ENCODE measurements at regions of chr10 and their contacts with region 1.

Region 1: DNA sequence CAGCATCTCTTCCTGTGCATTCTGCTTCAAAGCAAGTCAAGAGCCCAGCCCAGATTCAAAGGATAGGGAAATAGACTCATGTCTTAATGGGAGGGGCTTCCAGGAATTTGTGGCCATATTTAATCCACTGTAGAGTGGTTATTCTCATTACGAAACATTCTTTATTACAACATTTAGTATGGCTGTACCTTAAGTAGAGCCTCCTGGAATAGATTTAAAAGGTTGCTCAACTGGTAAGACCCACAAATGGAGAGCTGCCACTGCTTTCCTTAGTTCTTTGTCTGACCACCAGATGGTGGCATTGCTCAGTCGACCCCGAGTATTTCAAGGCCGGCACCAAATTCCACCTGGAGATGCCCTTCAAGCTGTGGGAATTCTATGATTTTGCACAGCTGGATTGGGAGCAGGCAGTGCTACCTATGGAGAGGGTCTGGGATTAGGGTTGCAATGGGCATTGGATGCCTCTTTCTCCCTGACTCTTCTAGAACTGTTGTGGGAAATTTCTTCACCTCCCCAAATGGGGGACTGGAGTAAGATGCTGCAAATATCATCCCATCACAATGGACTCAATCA is 102.2 kb downstream of the RBM20 start:
- DNase-seq: peak in 9 of 10 donors; percentile 24 to 73 (median 61)
- H3K4me3 ChIP-seq: no peak overlapping the region
- H3K27ac ChIP-seq: peak overlapping the region in 1 of 59 donors; percentile 18
- H3K27me3 ChIP-seq: peaks cover 0 to 3% (median 0%) of the 10 kb centered on the region in 45 donors
- CTCF ChIP-seq: peak; percentile 63 to 96 (median 87)

Region 2: DNA sequence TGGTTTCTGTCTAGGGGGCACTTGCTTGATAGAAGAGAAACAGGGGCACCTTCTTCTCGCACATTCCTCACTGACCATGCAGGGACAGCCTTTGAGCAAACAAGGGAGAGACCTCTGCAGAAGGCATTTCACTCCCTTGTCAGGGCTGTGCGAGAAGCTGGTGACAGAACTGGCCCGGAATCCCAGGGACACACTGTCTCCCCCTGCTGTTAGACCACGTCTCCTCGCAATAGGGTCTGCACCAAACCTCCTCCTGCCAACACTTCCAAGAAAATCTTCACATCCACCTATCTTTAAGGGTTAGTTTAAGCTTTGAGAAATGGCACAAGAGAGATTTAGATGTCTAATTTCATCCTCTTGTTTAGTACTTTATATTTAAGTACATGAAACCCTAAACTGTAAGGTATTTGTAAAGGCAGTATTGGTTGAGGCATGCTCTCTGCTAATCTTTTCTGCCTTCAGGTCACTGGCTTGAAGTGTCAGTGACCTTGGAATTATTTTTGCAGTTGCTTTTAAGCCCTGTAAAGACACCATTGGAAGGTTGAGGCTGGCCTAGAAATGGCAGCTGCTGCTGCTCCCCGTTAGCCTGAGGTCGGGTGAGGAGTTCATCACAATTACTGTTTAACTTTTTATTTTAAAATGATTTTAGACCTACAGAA is 65.2 kb before region 1 on chr10:
- intact Hi-C with region 1: no loop called
- DNase-seq: no peak
- H3K4me3 ChIP-seq: no peak overlapping the region
- H3K27ac ChIP-seq: no peak overlapping the region
- H3K27me3 ChIP-seq: peaks cover 0 to 12% (median 0%) of the 10 kb centered on the region in 45 donors
- CTCF ChIP-seq: peak in 49 of 56 donors; percentile 13 to 68 (median 42)

Region 3: GRCh38 chr10:110871298-110872084 is 125.2 kb after region 1 on chr10 and contains the start of gene PDCD4:
- intact Hi-C with region 1: loop called in 1 of 2 experiments (anchors 5 kb)
- DNase-seq: peak; percentile 99 to 100 (median 100)
- H3K4me3 ChIP-seq: peak within 1 kb of the TSS; percentile 53 to 99 (median 94)
- H3K27ac ChIP-seq: peak within 1 kb of the TSS; percentile 78 to 99 (median 98)
- H3K27me3 ChIP-seq: no peaks in the 10 kb centered on the region
- CTCF ChIP-seq: peak in 15 of 56 donors; percentile 3 to 22 (median 6)
- total RNA-seq, gene PDCD4: 45.2 to 105 (median 67.9) TPM

Region 4: GRCh38 chr10:110893559-110894179 is 147.3 kb after region 1 on chr10:
- intact Hi-C with region 1: loop called (anchors 2 to 5 kb)
- DNase-seq: no peak
- H3K4me3 ChIP-seq: no peak overlapping the region
- H3K27ac ChIP-seq: peak overlapping the region in 3 of 59 donors; percentile 7 to 23 (median 8)
- H3K27me3 ChIP-seq: no peaks in the 10 kb centered on the region
- CTCF ChIP-seq: peak; percentile 51 to 90 (median 78)

Region 5: GRCh38 chr10:111030042-111030750 is 283.9 kb after region 1 on chr10:
- intact Hi-C with region 1: no loop called
- DNase-seq: no peak
- H3K4me3 ChIP-seq: no peak overlapping the region
- H3K27ac ChIP-seq: no peak overlapping the region
- H3K27me3 ChIP-seq: no peaks in the 10 kb centered on the region
- CTCF ChIP-seq: no peak

Region 6: GRCh38 chr10:111207500-111207899 is 461.2 kb after region 1 on chr10:
- intact Hi-C with region 1: loop called in 1 of 2 experiments (anchors 10 kb)
- DNase-seq: no peak
- H3K4me3 ChIP-seq: no peak overlapping the region
- H3K27ac ChIP-seq: no peak overlapping the region
- H3K27me3 ChIP-seq: peaks cover 0 to 13% (median 0%) of the 10 kb centered on the region in 45 donors
- CTCF ChIP-seq: peak in 7 of 56 donors; percentile 10 to 22 (median 14)